ENCODE measurements at regions of chr9 and their contacts with region 1.

Region 1: DNA sequence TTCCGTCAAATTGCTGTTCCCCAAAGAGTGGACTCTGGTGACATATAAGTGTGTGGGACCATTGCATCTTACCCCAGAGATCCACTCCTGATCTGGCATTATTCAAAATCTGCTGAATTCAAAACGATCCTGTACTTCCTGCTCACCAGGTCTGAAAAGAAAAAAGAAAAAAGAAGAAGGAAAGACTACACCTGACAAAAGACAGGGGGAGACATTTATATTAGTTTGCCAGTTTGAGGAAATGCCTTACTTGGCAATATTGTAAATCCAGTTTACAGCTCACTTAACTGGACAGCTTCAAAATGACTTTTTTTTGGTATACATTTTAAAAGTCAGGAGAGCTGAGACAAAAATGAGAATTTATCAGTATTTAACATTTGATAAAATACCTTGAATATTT is 15.0 kb upstream of the GRHPR start:
- DNase-seq: peak; percentile 18
- H3K4me3 Mint-ChIP-seq: no peak overlapping the region
- H3K27ac Mint-ChIP-seq: no peak overlapping the region
- H3K4me1 Mint-ChIP-seq: peaks cover 14% of the 10 kb centered on the region
- H3K27me3 Mint-ChIP-seq: no peaks in the 10 kb centered on the region
- CTCF ChIP-seq: peak; percentile 15

Region 2: GRCh38 chr9:37382982-37383357 is 24.5 kb before region 1 on chr9:
- CTCF ChIA-PET with region 1: no interaction called
- POLR2A ChIA-PET with region 1: no interaction called
- intact Hi-C with region 1: no loop called
- DNase-seq: no peak
- H3K4me3 Mint-ChIP-seq: no peak overlapping the region
- H3K27ac Mint-ChIP-seq: no peak overlapping the region
- H3K4me1 Mint-ChIP-seq: no peaks in the 10 kb centered on the region
- H3K27me3 Mint-ChIP-seq: no peaks in the 10 kb centered on the region
- CTCF ChIP-seq: no peak

Region 3: DNA sequence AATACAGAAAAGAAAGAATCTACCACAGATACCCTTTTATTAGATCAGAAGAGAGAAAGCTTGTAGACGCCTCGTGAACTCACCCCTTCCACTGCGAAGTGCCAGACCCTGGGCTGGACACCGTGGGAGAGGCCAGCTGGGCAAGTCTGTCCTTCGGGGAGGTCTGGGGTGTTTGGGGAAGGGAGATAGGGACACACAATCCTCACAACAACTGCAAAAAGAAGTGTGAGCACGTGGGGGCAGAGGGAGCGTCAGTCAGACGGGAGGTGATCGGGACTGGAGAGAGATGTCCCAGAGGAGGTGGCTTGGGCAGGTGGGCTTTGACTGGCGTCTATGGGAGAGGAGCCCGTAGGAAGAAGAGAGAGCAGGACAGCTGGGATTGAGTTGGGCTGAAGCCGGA is 12.2 kb before region 1 on chr9:
- CTCF ChIA-PET with region 1: interaction called, 10 read pairs
- POLR2A ChIA-PET with region 1: interaction called, 6 read pairs
- intact Hi-C with region 1: no loop called
- DNase-seq: no peak
- H3K4me3 Mint-ChIP-seq: no peak overlapping the region
- H3K27ac Mint-ChIP-seq: no peak overlapping the region
- H3K4me1 Mint-ChIP-seq: no peaks in the 10 kb centered on the region
- H3K27me3 Mint-ChIP-seq: peaks cover 11% of the 10 kb centered on the region
- CTCF ChIP-seq: no peak

Measured in MCF 10A (cell line).